ENCODE measurements at regions of chr6 and their contacts with region 1.

Region 1: GRCh38 chr6:33317669-33318425 is at the start of gene ZBTB22:
- DNase-seq: peak; percentile 86 to 97
- ATAC-seq: peak; percentile 65 to 82
- H3K4me3 ChIP-seq: peak within 1 kb of the TSS; percentile 41
- H3K27ac ChIP-seq: peak within 1 kb of the TSS; percentile 69 to 91
- H3K4me1 ChIP-seq: peaks cover 42% of the 10 kb centered on the region
- CTCF ChIP-seq: no peak
- EP300 ChIP-seq: no peak
- POLR2A ChIP-seq: no peak
- RAD21 ChIP-seq: no peak
- polyA plus RNA-seq, gene ZBTB22: 3.2 and 4.2 TPM in 2 replicates

Region 2: DNA sequence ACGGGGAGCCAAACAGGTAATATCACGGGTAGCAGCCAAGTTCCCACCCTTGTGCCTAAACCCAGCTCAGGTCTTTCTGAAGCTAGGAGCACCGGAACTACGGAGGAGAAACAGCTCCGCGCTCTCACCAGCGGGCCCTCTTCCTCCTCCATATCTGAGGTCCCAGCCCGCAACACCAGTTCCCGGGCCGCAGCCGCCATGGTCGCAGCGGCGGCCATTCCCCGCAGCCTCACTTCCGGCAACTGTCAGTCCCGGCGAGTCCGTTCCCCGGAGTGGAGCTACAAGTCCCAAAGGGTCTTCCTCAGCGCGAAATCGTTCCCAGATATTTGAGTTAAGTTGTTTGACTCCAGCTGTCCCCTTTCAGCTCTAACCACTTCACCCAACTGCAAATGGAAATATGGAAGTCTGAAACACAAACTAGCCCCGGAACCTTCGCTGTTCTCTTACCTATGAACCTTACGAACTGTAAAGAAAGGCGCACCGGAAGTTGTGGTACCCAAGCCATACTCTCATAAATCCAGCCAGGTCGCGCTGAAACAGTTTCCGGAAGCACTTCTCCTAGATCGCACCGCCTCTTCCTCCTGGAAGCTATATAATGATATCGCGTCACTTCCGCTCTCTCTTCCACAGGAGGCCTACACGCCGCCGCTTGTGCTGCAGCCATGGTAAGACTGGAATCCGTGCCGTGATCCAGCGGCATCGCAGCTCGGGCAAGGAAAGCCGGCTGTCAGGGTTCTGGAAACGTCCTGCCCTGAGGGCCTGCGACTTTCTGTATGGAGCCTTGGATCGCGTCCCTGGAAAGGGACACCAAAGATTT is 46.2 kb before region 1 on chr6 and contains the starts of genes RPS18 and VPS52:
- CTCF ChIA-PET with region 1: no interaction called
- POLR2A ChIA-PET with region 1: interaction called, 11 read pairs
- DNase-seq: peak; percentile 76 to 99
- ATAC-seq: peak; percentile 89 to 92
- H3K4me3 ChIP-seq: peak within 1 kb of the TSS; percentile 87
- H3K27ac ChIP-seq: peak within 1 kb of the TSS; percentile 91 to 97
- H3K4me1 ChIP-seq: peaks cover 39% of the 10 kb centered on the region
- CTCF ChIP-seq: no peak
- EP300 ChIP-seq: no peak
- POLR2A ChIP-seq: peak; percentile 98
- RAD21 ChIP-seq: no peak
- polyA plus RNA-seq, gene RPS18: 3,426 and 3,692 TPM in 2 replicates
- polyA plus RNA-seq, gene VPS52: 38.9 and 44.3 TPM in 2 replicates

Region 3: DNA sequence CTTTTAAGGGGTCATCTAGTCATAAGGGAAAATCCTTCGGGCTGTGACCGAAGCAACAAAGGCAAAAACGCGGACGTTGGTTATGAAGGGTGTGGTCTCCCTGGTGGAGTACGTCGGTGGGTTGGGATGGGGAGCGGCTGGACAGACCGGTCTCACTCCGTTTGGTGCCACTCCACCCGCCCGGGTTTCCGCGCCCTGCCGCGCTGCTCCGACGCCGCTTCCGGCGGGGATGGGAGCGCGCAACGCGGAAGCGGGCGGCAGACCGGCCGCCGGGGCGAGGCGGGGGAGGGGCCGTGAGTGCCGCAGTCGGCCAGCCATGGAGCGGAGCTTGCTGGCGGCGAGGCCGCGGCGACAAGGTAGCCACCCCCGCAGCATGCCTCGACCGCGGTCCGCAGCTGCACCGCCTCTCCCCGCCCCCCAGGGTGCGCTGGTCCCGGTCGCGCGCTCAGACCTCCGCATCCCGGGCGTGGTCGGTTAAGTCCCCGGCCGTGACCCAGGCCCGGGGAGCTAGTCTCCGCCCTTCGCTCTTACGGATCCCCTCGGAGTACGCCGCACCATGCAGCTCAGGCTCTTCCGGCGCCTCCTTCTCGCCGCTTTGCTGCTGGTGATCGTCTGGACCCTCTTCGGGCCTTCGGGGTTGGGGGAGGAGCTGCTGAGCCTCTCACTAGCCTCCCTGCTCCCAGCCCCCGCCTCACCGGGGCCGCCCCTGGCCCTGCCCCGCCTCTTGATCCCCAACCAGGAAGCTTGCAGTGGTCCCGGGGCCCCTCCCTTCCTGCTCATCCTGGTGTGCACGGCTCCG is 40.8 kb before region 1 on chr6 and contains the start of gene B3GALT4:
- CTCF ChIA-PET with region 1: interaction called, 9 read pairs
- POLR2A ChIA-PET with region 1: interaction called, 11 read pairs
- DNase-seq: peak; percentile 46 to 73
- ATAC-seq: peak; percentile 52 to 65
- H3K4me3 ChIP-seq: peak within 1 kb of the TSS; percentile 87
- H3K27ac ChIP-seq: peak within 1 kb of the TSS; percentile 68 to 97
- H3K4me1 ChIP-seq: peaks cover 41% of the 10 kb centered on the region
- CTCF ChIP-seq: no peak; the same call in 2 of the 3 replicates
- EP300 ChIP-seq: no peak
- POLR2A ChIP-seq: 0 out of 2 replicates have a peak, but pooled peaks have one; percentile 21
- RAD21 ChIP-seq: no peak
- polyA plus RNA-seq, gene B3GALT4: 0.54 and 0.74 TPM in 2 replicates

Measured in A549 (cell line).